PC-3 (cell line): ENCODE measurements at regions of chr12 and their contacts with region 1.

Region 1: DNA sequence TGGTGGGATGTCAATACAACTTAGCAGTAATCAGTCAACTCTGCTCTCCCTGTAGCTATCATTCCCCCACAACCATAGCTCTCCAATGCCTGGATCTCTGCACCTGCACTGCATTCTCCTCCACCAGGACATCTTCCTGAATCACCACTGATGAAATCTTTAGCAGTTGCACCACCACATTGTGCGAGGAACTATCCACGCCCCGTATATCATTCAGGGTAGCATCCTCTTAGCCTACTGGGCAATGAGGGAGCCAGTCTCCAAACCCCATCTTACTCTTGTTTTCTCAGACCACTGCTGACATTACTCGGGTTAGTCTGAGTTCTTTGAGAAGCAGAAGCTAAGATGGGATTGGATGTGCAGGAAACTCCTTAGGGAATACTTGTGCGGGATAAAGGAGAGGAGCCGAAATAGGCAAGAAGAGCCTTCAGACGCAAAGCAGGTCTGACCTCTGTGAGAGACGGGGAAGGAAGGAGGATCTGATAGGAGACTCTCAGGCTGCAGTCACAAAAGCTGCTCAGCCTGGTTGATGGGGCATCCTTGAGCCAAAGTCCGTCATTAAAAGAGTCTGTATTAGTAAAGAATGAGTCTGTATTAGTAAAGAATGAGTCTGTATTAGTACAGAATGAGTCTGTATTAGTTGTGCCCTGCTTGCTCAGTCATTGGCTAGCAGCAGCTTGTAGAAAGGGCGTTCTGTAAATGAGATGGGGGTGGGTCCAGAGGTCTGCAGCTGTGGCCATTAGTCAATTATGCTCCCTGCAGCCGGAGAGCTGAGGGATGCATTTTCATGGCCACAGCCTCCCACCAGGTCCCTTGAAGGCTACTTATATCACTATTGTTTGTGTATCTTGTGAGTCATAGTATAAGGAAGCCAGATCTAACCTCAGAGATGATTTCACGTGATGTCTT is 49.6 kb upstream of the RASSF3 start:
- DNase-seq: peak; percentile 89
- ATAC-seq: peak; percentile 94
- H3K4me3 ChIP-seq: no peak overlapping the region; the same call in 1 of the 2 replicates
- H3K27ac ChIP-seq: peak overlapping the region; percentile 39
- H3K4me1 ChIP-seq: peaks cover 21% of the 10 kb centered on the region
- H3K27me3 ChIP-seq: no peaks in the 10 kb centered on the region
- CTCF ChIP-seq: no peak

Region 2: DNA sequence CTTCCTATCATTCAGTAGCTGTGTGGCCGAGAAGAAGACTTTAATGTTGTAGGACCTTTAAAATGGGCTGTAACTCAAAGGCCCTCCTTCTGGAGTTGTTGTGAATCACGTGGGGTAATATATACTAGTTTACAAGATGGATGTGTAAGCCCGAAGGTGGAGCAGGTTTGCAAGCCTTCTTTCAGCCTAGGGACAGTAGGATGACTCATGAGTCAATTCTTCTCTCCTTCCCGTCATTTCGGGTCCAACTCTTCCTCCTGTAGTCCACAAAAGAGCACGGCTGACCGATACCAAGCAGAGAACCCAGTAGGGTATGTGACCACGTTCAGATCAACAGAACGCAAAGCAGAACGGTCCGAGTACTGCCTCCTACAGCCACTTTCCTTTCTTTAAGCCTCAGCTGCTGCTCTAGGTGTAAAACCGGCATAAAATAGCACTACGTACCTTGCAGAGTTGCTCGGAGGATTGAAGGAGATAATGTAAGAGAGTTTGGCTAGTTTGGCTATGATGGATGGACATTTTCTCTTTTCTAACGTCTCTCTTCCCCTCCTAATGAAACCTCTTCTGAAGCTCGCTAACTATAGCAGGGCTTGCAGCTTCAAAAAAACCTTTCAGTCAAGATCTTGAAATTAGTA is 48.4 kb after region 1 on chr12:
- CTCF ChIA-PET with region 1: interaction called, 3 read pairs
- POLR2A ChIA-PET with region 1: no interaction called
- intact Hi-C with region 1: loop called (anchors 1 kb)
- DNase-seq: peak; percentile 86
- ATAC-seq: peak; percentile 54
- H3K4me3 ChIP-seq: peak overlapping the region; percentile 69
- H3K27ac ChIP-seq: peak overlapping the region; percentile 78
- H3K4me1 ChIP-seq: peaks cover 10% of the 10 kb centered on the region; the same call in 1 of the 2 replicates
- H3K27me3 ChIP-seq: no peaks in the 10 kb centered on the region
- CTCF ChIP-seq: no peak

Region 3: DNA sequence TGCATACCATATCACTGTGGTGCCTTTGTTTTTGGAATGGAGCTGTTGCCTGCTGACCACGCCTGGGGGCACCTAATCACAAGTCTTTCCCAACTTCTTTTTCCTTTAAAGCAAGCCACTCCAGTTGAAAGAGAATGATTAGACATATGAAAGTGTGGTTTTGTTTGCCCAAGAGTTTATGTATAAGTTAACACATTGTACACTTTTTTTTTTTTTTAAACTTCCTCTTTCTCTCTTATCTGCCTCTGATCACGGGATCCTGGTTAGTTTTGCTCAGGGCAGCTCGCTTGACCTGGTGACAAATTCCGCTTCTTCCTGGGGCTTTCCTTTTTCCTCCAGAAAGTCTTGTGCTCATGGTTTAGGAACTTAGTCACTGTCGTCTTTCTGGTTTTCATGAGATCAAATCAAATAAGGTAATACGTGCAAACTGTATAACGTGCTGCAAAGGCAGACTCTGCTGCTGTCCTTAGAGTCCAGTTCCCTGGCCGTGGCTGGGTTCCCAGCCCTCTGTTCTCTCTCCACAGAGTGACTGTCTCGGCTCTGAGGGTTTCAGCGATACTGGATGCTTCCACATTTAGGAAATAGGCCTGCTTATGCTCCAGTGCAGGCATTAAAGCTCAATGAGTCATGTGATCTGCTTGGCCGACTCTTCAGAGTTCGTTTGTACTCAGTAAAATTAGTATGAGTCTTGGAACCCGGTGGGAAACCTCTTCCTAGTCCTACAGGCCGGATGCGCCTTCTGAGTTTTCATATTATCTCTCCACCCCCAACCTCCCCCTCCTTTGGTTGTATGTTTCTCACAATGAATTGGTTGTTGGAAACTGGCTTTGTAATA is 64.8 kb after region 1 on chr12:
- CTCF ChIA-PET with region 1: no interaction called
- POLR2A ChIA-PET with region 1: no interaction called
- intact Hi-C with region 1: no loop called
- DNase-seq: peak; percentile 94
- ATAC-seq: peak; percentile 77
- H3K4me3 ChIP-seq: peak overlapping the region; percentile 50
- H3K27ac ChIP-seq: peak overlapping the region; percentile 97
- H3K4me1 ChIP-seq: peaks cover 48% of the 10 kb centered on the region
- H3K27me3 ChIP-seq: no peaks in the 10 kb centered on the region
- CTCF ChIP-seq: peak; percentile 14; the same call in 1 of the 2 replicates